B cell (primary cell): ENCODE measurements at regions of chr13 and their contacts with region 1.

Region 1: GRCh38 chr13:75870397-75870903 is 234.3 kb downstream of the LMO7 start:
- DNase-seq: peak; percentile 37
- ATAC-seq: no peak
- H3K4me3 ChIP-seq: peak overlapping the region in 1 of 5 experiments; percentile 7
- H3K4me3 Mint-ChIP-seq: peak overlapping the region; percentile 10
- H3K27ac ChIP-seq: no peak overlapping the region
- H3K27ac Mint-ChIP-seq: no peak overlapping the region
- H3K4me1 ChIP-seq: no peaks in the 10 kb centered on the region
- H3K4me1 Mint-ChIP-seq: peaks cover 3% of the 10 kb centered on the region
- H3K27me3 ChIP-seq: peaks cover 0 to 8% (median 3%) of the 10 kb centered on the region in 4 experiments
- H3K27me3 Mint-ChIP-seq: peaks cover 30% of the 10 kb centered on the region
- CTCF ChIP-seq: peak; percentile 96

Region 2: GRCh38 chr13:75145927-75146326 is 724.5 kb before region 1 on chr13:
- CTCF ChIA-PET with region 1: no interaction called
- POLR2A ChIA-PET with region 1: no interaction called
- intact Hi-C with region 1: no loop called
- DNase-seq: no peak
- ATAC-seq: no peak
- H3K4me3 ChIP-seq: no peak overlapping the region
- H3K4me3 Mint-ChIP-seq: no peak overlapping the region
- H3K27ac ChIP-seq: no peak overlapping the region
- H3K27ac Mint-ChIP-seq: no peak overlapping the region
- H3K4me1 ChIP-seq: no peaks in the 10 kb centered on the region
- H3K4me1 Mint-ChIP-seq: no peaks in the 10 kb centered on the region
- H3K27me3 ChIP-seq: no peaks in the 10 kb centered on the region
- H3K27me3 Mint-ChIP-seq: no peaks in the 10 kb centered on the region
- CTCF ChIP-seq: no peak

Region 3: DNA sequence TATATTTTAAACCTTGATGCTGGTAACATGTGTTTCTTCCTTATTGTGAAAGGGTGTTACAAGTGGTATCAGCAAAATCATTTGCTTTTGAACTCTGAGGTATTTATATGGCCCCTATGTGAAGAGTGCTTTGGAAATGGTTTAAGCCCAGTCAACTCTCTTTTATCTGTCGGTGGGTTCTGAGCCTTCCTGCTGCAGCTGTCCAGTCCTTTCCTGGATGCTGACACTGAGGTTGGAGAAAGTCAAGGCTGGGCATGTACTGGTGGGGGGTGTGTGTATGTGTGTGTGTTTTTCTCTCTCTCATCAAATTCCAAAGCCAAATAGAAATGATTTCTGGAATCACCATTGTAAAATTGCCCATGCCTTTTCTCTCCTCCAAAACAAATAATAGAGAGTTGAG is 13.2 kb before region 1 on chr13:
- CTCF ChIA-PET with region 1: interaction called, 12 read pairs
- POLR2A ChIA-PET with region 1: no interaction called
- intact Hi-C with region 1: no loop called
- DNase-seq: no peak
- ATAC-seq: no peak
- H3K4me3 ChIP-seq: no peak overlapping the region
- H3K4me3 Mint-ChIP-seq: no peak overlapping the region
- H3K27ac ChIP-seq: no peak overlapping the region
- H3K27ac Mint-ChIP-seq: no peak overlapping the region
- H3K4me1 ChIP-seq: no peaks in the 10 kb centered on the region
- H3K4me1 Mint-ChIP-seq: no peaks in the 10 kb centered on the region
- H3K27me3 ChIP-seq: no peaks in the 10 kb centered on the region
- H3K27me3 Mint-ChIP-seq: no peaks in the 10 kb centered on the region
- CTCF ChIP-seq: no peak